Right ventricle myocardium superior (tissue), 1 donor: ENCODE measurements at regions of chr10 and their contacts with region 1.

Region 1: GRCh38 chr10:96513698-96514561 is at the start of gene TLL2:
- DNase-seq: peak; percentile 94
- ATAC-seq: peak; percentile 96
- total RNA-seq, gene TLL2: 8.7 TPM

Region 2: DNA sequence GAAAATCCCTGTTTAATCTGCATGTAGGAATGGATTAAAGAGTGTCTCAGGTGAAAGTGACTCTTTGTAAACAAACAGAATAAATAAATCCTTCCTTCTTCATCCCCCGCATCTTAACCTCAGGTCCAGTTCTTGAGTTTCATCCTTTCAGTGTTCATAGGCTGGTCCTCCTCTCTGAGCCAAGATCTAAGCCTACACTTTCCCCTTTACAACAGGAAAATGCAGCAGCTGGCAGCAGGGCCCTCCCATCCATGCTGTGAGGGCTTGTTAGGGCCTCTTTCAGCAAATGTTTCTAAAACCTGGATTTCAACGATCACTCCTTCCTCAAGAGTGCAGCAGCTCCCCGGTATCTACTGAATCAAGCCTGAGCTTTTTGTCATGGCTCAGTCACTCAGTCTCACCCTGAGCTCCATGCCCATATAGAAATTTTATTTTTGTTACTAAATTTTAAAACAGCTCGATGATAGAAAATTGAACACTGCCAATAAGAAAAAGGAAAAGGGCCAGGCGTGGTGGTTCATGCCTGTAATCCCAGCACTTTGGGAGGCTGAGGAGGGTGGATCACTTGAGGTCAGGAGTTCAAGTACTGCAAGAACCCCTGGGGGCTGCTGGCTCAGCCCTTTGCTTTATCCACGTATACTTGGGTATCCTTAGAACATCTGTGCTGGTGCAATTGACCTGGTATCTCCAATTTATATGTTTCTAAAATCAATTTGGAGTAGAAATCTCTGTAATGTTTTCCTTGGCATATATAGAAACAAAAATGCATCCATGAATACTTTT is 258.2 kb before region 1 on chr10:
- intact Hi-C with region 1: no loop called
- DNase-seq: no peak
- ATAC-seq: no peak

Region 3: DNA sequence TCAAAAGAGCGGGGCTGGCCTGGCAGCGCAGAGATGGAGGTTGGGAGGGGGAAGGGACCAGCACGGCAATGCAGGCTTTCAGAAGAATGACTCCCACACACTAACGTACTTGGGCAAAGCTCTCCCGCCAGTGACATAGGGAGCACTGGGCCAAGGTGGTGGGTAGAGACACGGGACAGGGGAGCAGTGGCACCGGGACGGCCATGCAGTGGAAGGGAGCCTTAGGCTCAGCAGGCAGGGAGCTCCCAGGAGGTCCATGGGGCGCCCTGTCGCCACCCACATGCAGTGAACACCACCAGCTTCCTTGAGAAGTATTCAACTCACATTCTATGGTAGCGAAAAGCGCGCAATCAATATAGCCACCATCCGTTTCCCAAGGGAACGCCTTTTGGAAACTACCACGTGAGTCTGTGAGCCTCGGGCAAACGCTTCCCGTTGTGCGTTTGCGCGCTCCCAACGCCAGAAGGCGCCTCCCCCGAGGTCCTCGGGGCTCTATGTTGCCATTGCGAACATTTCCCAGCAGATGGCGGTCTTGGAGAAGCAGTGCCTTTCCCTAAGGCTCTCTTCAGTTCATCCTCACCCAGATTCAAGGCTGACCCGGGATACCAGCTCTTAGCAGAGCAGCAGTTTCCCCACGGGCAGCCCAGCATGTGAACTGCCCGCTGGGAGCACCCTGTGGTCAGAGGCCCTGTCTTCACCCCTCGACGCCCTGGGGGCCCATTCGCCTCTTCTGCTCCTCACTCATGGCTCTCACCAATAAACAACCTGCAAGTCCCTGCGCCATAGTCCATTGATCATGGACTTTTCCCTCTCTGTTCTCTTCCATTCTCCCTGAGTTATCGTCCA is 138.7 kb before region 1 on chr10:
- intact Hi-C with region 1: loop called (anchors 5 kb)
- DNase-seq: peak; percentile 91
- ATAC-seq: peak; percentile 91

Region 4: GRCh38 chr10:96556003-96556402 is 42.1 kb after region 1 on chr10:
- intact Hi-C with region 1: no loop called
- DNase-seq: no peak
- ATAC-seq: peak; percentile 70